CD4-positive, alpha-beta memory T cell (primary cell): ENCODE measurements at regions of chr1 and their contacts with region 1.

Region 1: DNA sequence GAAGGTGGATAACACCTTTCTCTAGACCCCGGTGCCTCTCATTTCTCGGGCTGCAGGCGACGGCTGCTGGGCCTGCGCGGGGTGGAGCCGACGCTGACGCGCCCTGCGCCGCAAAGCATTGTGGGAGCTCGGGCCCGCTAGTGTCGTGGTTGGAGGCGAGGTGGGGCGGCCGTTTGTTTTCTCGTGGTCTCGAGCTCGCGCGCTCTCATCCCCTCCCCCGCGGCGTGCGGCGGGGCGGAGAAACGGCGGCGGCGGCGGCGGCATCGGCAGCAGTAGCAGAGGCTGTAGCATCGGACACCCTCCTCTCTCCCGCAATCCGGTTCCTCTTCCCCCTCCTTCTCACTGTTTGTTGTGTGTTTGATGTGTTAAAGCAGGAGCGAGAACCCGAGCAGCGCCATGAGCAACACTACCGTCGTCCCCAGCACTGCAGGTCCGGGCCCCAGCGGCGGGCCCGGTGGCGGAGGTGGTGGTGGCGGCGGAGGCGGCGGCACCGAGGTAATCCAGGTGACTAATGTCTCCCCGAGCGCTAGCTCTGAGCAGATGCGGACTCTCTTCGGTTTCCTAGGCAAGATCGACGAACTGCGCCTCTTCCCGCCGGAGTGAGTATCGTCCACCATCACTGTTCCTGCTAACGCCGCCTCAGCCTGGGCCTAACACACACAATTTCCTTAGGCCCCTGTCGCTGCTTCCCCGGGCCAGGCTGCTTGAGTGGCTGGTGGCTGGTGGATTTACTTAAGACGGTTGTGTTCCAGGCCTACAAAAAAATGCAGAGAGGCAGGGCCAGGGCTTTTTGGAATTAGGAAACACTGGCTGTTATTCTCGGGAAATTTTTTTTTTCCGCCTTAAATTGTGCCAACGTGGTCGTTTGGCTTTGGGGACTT is at the start of gene SRSF11:
- DNase-seq: peak; percentile 95 to 96 (median 95)
- H3K4me3 ChIP-seq: peak within 1 kb of the TSS; percentile 67 to 70
- H3K4me3 Mint-ChIP-seq: peak within 1 kb of the TSS; percentile 85 to 98 (median 91)
- H3K27ac ChIP-seq: peak within 1 kb of the TSS; percentile 95
- H3K27ac Mint-ChIP-seq: peak within 1 kb of the TSS; percentile 92 to 99 (median 96)
- H3K4me1 ChIP-seq: peaks cover 49% of the 10 kb centered on the region
- H3K4me1 Mint-ChIP-seq: peaks cover 24 to 57% (median 44%) of the 10 kb centered on the region in 4 donors
- H3K27me3 ChIP-seq: no peaks in the 10 kb centered on the region
- H3K27me3 Mint-ChIP-seq: no peaks in the 10 kb centered on the region
- total RNA-seq, gene SRSF11: 359 to 374 TPM

Region 2: GRCh38 chr1:69377507-69377906 is 844.0 kb before region 1 on chr1:
- CTCF ChIA-PET with region 1: no interaction called
- POLR2A ChIA-PET with region 1: no interaction called
- intact Hi-C with region 1: no loop called
- DNase-seq: no peak
- H3K4me3 ChIP-seq: no peak overlapping the region
- H3K4me3 Mint-ChIP-seq: no peak overlapping the region
- H3K27ac ChIP-seq: no peak overlapping the region
- H3K27ac Mint-ChIP-seq: no peak overlapping the region
- H3K4me1 ChIP-seq: no peaks in the 10 kb centered on the region
- H3K4me1 Mint-ChIP-seq: no peaks in the 10 kb centered on the region
- H3K27me3 ChIP-seq: no peaks in the 10 kb centered on the region
- H3K27me3 Mint-ChIP-seq: no peaks in the 10 kb centered on the region

Region 3: DNA sequence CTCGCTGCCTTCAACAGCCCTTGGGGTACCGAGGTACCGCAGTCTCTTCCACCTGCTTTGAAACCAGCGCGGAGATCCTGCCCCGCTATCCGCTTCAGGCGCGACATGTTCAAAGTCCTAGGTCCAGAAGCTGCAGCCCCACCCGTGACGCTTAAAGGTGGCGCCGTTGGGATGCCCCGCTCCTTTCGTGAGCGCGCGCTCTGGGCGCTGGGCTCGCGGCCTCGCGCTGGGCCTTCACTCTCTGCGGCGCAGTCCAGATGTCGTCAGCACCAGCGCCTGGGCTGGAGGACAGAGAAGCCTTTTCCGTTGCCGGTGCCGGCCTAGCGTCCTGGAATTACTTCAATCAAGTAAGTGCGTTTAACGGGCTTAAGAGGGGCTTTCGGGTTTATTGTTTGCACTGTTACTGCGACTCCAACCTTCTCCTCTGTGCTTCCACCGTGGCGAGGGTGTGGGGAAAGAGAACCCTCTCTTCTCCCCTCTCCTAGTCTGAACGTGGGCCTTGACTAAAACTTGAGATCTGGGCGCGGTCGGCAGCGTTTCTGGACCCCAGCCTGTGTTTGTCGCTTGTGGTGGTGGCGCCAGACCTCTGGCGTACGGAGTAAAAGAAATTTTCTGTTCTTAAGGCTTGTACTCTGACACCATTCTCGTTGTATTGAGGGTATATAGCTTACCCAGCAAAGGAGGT is 15.9 kb before region 1 on chr1 and contains the start of gene LRRC40:
- CTCF ChIA-PET with region 1: interaction called, 20 read pairs
- POLR2A ChIA-PET with region 1: interaction called, 76 read pairs
- intact Hi-C with region 1: loop called (anchors 1 kb)
- DNase-seq: peak; percentile 95 to 98 (median 95)
- H3K4me3 ChIP-seq: peak within 1 kb of the TSS; percentile 68 to 93
- H3K4me3 Mint-ChIP-seq: peak within 1 kb of the TSS; percentile 97 to 99 (median 98)
- H3K27ac ChIP-seq: peak within 1 kb of the TSS; percentile 97
- H3K27ac Mint-ChIP-seq: peak within 1 kb of the TSS; percentile 99 to 100 (median 100)
- H3K4me1 ChIP-seq: peaks cover 71% of the 10 kb centered on the region
- H3K4me1 Mint-ChIP-seq: peaks cover 40 to 89% (median 62%) of the 10 kb centered on the region in 4 donors
- H3K27me3 ChIP-seq: no peaks in the 10 kb centered on the region
- H3K27me3 Mint-ChIP-seq: no peaks in the 10 kb centered on the region
- total RNA-seq, gene LRRC40: 11.3 to 11.6 TPM

Region 4: DNA sequence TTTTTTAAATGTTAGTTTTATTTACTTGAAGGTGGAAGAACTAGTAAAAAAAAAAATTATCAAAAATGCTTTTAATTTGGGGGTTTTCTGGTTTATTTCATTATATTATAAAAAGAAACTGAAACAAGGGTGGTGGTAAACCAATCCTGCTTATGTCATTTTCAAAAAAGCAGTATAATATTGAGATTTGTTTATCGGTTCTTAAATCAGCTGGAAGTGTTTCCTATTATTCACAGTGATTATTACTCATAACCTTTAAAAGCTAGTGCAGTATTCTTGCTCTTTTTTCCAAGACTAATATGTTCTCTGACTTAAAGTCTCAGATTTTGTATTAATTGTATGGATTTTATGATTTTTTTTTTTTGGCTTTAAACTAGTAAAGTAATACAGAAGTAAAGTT is 10.7 kb before region 1 on chr1:
- CTCF ChIA-PET with region 1: interaction called, 20 read pairs
- POLR2A ChIA-PET with region 1: interaction called, 76 read pairs
- intact Hi-C with region 1: no loop called
- DNase-seq: no peak
- H3K4me3 ChIP-seq: no peak overlapping the region
- H3K4me3 Mint-ChIP-seq: peak overlapping the region in 1 of 8 donors; percentile 39
- H3K27ac ChIP-seq: peak overlapping the region; percentile 27
- H3K27ac Mint-ChIP-seq: peak overlapping the region in 1 of 7 donors; percentile 66
- H3K4me1 ChIP-seq: peaks cover 39% of the 10 kb centered on the region
- H3K4me1 Mint-ChIP-seq: peaks cover 29 to 55% (median 43%) of the 10 kb centered on the region in 4 donors
- H3K27me3 ChIP-seq: no peaks in the 10 kb centered on the region
- H3K27me3 Mint-ChIP-seq: no peaks in the 10 kb centered on the region

Region 5: DNA sequence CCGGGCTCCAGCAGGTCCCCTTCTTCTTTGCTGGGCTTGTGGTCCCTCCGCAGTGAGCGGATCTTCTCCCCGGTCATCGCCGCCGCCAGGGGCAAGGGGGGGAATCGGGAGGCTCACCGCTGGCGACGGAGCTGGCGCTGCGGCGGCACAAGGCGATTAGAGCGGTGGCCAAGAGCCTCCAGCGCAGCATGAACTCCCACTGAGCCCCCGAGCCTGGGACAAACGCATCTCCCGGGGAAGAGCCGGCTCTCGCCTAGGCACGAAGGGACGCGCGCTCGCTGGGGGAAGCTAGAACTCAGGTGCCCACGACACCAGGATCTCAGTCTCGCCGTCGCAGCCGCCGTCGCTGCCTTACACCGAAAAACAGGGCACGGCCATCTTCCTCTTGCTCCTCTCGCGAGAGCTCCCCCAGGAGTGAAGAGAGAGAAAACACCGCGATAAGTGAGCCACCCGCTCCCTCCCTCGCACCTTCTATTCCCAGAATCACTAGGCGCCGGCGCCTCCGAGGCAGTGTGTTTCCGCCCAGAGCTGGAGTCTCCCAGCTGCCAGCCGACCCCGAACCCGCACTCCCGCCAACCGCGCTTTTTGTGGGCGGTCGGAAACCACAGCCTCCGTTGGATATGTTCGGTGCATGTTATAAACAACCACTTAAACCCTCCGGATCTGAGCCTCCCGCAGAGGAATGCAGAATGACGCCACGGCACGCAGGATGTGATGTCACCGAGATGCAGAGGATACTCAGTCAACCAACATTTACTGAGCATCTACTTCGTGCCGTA is 133.0 kb after region 1 on chr1 and contains the start of gene ANKRD13C:
- CTCF ChIA-PET with region 1: interaction called, 4 read pairs
- POLR2A ChIA-PET with region 1: interaction called, 44 read pairs
- intact Hi-C with region 1: loop called (anchors 1 kb)
- DNase-seq: peak; percentile 94 to 97 (median 95)
- H3K4me3 ChIP-seq: peak within 1 kb of the TSS; percentile 15 to 89
- H3K4me3 Mint-ChIP-seq: peak within 1 kb of the TSS; percentile 90 to 99 (median 95)
- H3K27ac ChIP-seq: peak within 1 kb of the TSS; percentile 92
- H3K27ac Mint-ChIP-seq: peak within 1 kb of the TSS; percentile 96 to 100 (median 99)
- H3K4me1 ChIP-seq: peaks cover 45% of the 10 kb centered on the region
- H3K4me1 Mint-ChIP-seq: peaks cover 24 to 53% (median 41%) of the 10 kb centered on the region in 4 donors
- H3K27me3 ChIP-seq: no peaks in the 10 kb centered on the region
- H3K27me3 Mint-ChIP-seq: no peaks in the 10 kb centered on the region
- total RNA-seq, gene ANKRD13C: 29.1 to 34.0 TPM

Region 6: GRCh38 chr1:70410604-70411359 is 189.3 kb after region 1 on chr1 and contains the start of gene CTH:
- CTCF ChIA-PET with region 1: no interaction called
- POLR2A ChIA-PET with region 1: interaction called, 17 read pairs
- intact Hi-C with region 1: loop called (anchors 1 kb)
- DNase-seq: peak; percentile 91 to 95 (median 93)
- H3K4me3 ChIP-seq: peak within 1 kb of the TSS; percentile 64 to 66
- H3K4me3 Mint-ChIP-seq: peak within 1 kb of the TSS; percentile 90 to 99 (median 97)
- H3K27ac ChIP-seq: peak within 1 kb of the TSS; percentile 77
- H3K27ac Mint-ChIP-seq: peak within 1 kb of the TSS; percentile 94 to 99 (median 96)
- H3K4me1 ChIP-seq: peaks cover 16% of the 10 kb centered on the region
- H3K4me1 Mint-ChIP-seq: peaks cover 13 to 22% (median 18%) of the 10 kb centered on the region in 4 donors
- H3K27me3 ChIP-seq: no peaks in the 10 kb centered on the region
- H3K27me3 Mint-ChIP-seq: peaks cover 0 to 3% of the 10 kb centered on the region in 2 donors
- total RNA-seq, gene CTH: 2.0 to 2.9 TPM